ENCODE measurements at regions of chr16 and their contacts with region 1.

Region 1: GRCh38 chr16:83356266-83356665 is 451.5 kb upstream of the HSBP1 start:
- DNase-seq: peak; percentile 77
- H3K4me3 Mint-ChIP-seq: no peak overlapping the region
- H3K27ac Mint-ChIP-seq: no peak overlapping the region
- H3K4me1 Mint-ChIP-seq: no peaks in the 10 kb centered on the region
- H3K27me3 Mint-ChIP-seq: no peaks in the 10 kb centered on the region
- CTCF ChIP-seq: peak; percentile 43

Region 2: DNA sequence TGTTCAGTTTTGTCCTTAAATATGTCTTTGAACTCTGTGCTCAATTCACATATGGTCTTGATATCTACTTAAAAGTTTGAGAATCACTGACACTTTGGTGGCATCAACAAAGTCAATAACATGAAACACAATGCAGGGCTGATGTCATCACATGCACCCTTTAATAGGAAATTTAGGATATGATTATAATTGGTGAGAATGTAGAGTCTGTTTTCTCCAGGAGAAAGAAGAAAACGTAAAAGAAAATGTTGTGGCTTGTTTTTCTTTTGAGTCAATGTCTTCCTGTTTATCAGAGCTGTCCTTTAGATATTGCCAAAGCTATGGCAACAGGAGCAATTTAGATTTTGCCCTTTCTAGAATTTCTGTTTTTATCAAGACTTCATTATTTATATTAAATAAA is 332.6 kb before region 1 on chr16:
- CTCF ChIA-PET with region 1: no interaction called
- POLR2A ChIA-PET with region 1: no interaction called
- intact Hi-C with region 1: no loop called
- DNase-seq: no peak
- H3K4me3 Mint-ChIP-seq: no peak overlapping the region
- H3K27ac Mint-ChIP-seq: no peak overlapping the region
- H3K4me1 Mint-ChIP-seq: no peaks in the 10 kb centered on the region
- H3K27me3 Mint-ChIP-seq: no peaks in the 10 kb centered on the region
- CTCF ChIP-seq: no peak

Region 3: GRCh38 chr16:83158320-83158957 is 197.8 kb before region 1 on chr16:
- CTCF ChIA-PET with region 1: no interaction called
- POLR2A ChIA-PET with region 1: no interaction called
- intact Hi-C with region 1: no loop called
- DNase-seq: no peak
- H3K4me3 Mint-ChIP-seq: no peak overlapping the region
- H3K27ac Mint-ChIP-seq: no peak overlapping the region
- H3K4me1 Mint-ChIP-seq: no peaks in the 10 kb centered on the region
- H3K27me3 Mint-ChIP-seq: no peaks in the 10 kb centered on the region
- CTCF ChIP-seq: no peak

Region 4: GRCh38 chr16:83301971-83302370 is 54.3 kb before region 1 on chr16:
- CTCF ChIA-PET with region 1: interaction called, 4 read pairs
- POLR2A ChIA-PET with region 1: no interaction called
- intact Hi-C with region 1: loop called (anchors 2 kb)
- DNase-seq: no peak
- H3K4me3 Mint-ChIP-seq: no peak overlapping the region
- H3K27ac Mint-ChIP-seq: no peak overlapping the region
- H3K4me1 Mint-ChIP-seq: peaks cover 1% of the 10 kb centered on the region
- H3K27me3 Mint-ChIP-seq: no peaks in the 10 kb centered on the region
- CTCF ChIP-seq: no peak

Region 5: GRCh38 chr16:83336630-83337029 is 19.6 kb before region 1 on chr16:
- CTCF ChIA-PET with region 1: interaction called, 9 read pairs
- POLR2A ChIA-PET with region 1: interaction called, 10 read pairs
- intact Hi-C with region 1: no loop called
- DNase-seq: peak; percentile 89
- H3K4me3 Mint-ChIP-seq: no peak overlapping the region
- H3K27ac Mint-ChIP-seq: peak overlapping the region; percentile 83
- H3K4me1 Mint-ChIP-seq: peaks cover 26% of the 10 kb centered on the region
- H3K27me3 Mint-ChIP-seq: no peaks in the 10 kb centered on the region
- CTCF ChIP-seq: no peak

Region 6: DNA sequence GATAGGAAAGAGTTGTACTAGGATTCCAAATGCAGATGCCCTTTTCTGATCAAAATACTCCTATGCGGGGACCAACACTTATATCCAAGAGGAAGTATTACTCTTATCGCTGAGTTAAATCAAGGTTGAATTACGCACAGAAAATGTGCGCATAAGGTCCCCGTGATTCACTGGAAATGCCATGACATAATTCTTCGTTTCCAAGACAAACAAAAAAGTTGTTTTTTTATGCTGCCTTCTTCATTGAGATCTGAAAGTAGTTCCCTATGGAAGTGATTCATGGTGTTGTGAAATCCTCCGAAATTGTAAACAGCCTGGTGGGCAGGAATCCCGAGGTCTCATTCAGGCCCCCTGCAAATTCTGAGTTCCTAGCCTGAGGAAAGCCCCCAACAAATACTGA is 12.3 kb before region 1 on chr16:
- CTCF ChIA-PET with region 1: interaction called, 29 read pairs
- POLR2A ChIA-PET with region 1: interaction called, 3 read pairs
- intact Hi-C with region 1: no loop called
- DNase-seq: peak; percentile 88
- H3K4me3 Mint-ChIP-seq: no peak overlapping the region
- H3K27ac Mint-ChIP-seq: peak overlapping the region; percentile 93
- H3K4me1 Mint-ChIP-seq: peaks cover 14% of the 10 kb centered on the region
- H3K27me3 Mint-ChIP-seq: no peaks in the 10 kb centered on the region
- CTCF ChIP-seq: no peak

Region 7: GRCh38 chr16:83402967-83403366 is 46.7 kb after region 1 on chr16:
- CTCF ChIA-PET with region 1: interaction called, 17 read pairs
- POLR2A ChIA-PET with region 1: no interaction called
- intact Hi-C with region 1: no loop called
- DNase-seq: peak; percentile 53
- H3K4me3 Mint-ChIP-seq: no peak overlapping the region
- H3K27ac Mint-ChIP-seq: peak overlapping the region; percentile 61
- H3K4me1 Mint-ChIP-seq: peaks cover 11% of the 10 kb centered on the region
- H3K27me3 Mint-ChIP-seq: no peaks in the 10 kb centered on the region
- CTCF ChIP-seq: no peak

Region 8: DNA sequence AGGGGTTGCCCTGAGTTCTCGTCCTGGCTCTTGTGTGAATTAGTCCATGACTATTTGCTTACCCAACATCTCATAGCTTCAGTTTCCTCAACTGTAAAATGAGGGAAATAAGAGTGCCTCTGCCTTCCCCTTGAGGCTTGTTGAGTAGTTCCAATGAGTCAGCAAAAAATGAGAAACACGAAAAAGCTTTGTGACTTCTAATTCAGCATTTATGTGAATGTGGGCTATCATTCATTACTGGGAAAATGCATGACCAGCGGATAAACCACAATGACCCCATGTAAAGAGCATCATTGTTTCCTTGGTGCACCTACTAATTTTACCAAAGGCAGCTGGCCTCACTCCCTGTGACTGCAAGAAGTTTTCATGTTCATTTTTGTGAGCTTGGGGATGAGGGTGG is 76.9 kb after region 1 on chr16:
- CTCF ChIA-PET with region 1: no interaction called
- POLR2A ChIA-PET with region 1: no interaction called
- intact Hi-C with region 1: no loop called
- DNase-seq: no peak
- H3K4me3 Mint-ChIP-seq: no peak overlapping the region
- H3K27ac Mint-ChIP-seq: no peak overlapping the region
- H3K4me1 Mint-ChIP-seq: no peaks in the 10 kb centered on the region
- H3K27me3 Mint-ChIP-seq: no peaks in the 10 kb centered on the region
- CTCF ChIP-seq: no peak

Region 9: GRCh38 chr16:83449861-83450260 is 93.6 kb after region 1 on chr16:
- CTCF ChIA-PET with region 1: interaction called, 13 read pairs
- POLR2A ChIA-PET with region 1: interaction called, 4 read pairs
- intact Hi-C with region 1: loop called (anchors 5 kb)
- DNase-seq: no peak
- H3K4me3 Mint-ChIP-seq: no peak overlapping the region
- H3K27ac Mint-ChIP-seq: no peak overlapping the region
- H3K4me1 Mint-ChIP-seq: peaks cover 13% of the 10 kb centered on the region
- H3K27me3 Mint-ChIP-seq: no peaks in the 10 kb centered on the region
- CTCF ChIP-seq: no peak

Region 10: DNA sequence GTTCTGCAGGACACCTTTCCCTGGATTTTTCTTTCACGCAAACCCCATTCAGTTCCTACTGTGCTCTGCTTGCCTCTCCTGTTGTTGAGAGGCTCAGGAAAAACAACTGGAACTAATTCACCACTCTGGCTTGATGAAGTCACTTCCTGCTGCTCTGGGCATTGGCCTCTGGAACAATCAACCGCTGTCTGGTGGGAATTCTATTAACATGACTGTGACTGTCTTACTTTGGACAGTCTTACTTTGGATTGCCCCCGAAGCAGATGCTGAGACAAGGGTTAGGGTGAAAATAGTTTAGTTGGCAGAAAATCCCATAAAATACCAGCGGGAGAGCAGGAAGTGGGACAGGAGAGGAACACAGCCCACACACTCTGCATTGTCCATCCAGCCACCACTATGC is 361.5 kb after region 1 on chr16:
- CTCF ChIA-PET with region 1: no interaction called
- POLR2A ChIA-PET with region 1: no interaction called
- intact Hi-C with region 1: no loop called
- DNase-seq: no peak
- H3K4me3 Mint-ChIP-seq: no peak overlapping the region
- H3K27ac Mint-ChIP-seq: no peak overlapping the region
- H3K4me1 Mint-ChIP-seq: no peaks in the 10 kb centered on the region
- H3K27me3 Mint-ChIP-seq: no peaks in the 10 kb centered on the region
- CTCF ChIP-seq: no peak